ENCODE measurements at regions of chr9 and their contacts with region 1.

Region 1: GRCh38 chr9:127525401-127526187 is 74.3 kb downstream of the LRSAM1 start:
- DNase-seq: no peak
- H3K4me3 ChIP-seq: no peak overlapping the region
- H3K27ac ChIP-seq: no peak overlapping the region
- H3K4me1 ChIP-seq: peaks cover 44% of the 10 kb centered on the region
- H3K27me3 ChIP-seq: no peaks in the 10 kb centered on the region
- CTCF ChIP-seq: peak; percentile 75 to 79

Region 2: GRCh38 chr9:126885131-126885641 is 640.4 kb before region 1 on chr9:
- CTCF ChIA-PET with region 1: no interaction called
- dilution Hi-C with region 1: no loop called
- in situ Hi-C with region 1: no loop called
- intact Hi-C with region 1: no loop called
- DNase-seq: no peak
- H3K4me3 ChIP-seq: no peak overlapping the region
- H3K27ac ChIP-seq: no peak overlapping the region
- H3K4me1 ChIP-seq: no peaks in the 10 kb centered on the region
- H3K27me3 ChIP-seq: no peaks in the 10 kb centered on the region
- CTCF ChIP-seq: no peak

Region 3: DNA sequence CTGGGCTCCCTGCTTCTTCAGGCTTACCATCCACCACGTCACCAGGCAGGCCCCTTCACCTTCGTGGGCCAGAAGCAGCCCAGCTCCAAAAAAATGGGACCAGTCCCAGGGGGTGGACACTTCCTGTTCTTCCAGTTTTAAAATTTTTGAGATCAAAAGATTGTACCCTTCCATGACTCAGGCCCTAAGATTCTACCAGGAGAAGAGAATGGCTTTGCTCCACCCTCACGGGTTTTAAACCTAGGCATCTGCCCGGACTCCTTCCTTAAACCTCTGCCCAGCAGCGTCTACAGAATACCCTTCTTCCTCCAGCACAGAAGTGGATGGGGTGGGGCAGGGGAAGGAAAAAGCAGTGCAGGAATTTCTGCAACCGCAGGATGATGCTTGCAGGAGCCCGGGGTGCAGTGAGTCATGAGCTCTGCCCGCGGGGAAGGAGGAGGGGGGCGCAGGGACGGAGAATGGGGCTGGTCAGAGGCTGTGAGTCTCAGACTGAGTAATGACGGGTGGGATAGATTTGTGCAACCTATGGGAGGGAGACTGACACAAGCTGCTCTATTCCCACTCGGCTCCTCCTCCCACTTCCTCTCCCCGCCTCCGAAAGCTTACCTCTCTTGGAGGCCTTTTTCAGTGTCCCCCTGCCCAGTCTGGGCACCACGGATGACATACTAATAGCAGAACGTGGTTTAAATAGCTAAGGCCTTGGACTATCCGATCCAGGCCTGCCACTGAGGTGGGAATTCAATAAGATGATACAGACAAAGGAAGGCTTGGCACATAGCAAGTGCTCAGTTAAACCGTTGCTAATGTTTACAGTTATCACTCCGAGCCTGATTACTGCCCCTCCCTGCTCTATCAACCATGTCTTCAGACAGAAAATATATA is 36.3 kb after region 1 on chr9:
- CTCF ChIA-PET with region 1: no interaction called
- dilution Hi-C with region 1: loop called (anchors 5 kb)
- in situ Hi-C with region 1: no loop called
- intact Hi-C with region 1: no loop called
- DNase-seq: peak; percentile 99
- H3K4me3 ChIP-seq: no peak overlapping the region
- H3K27ac ChIP-seq: peak overlapping the region; percentile 76
- H3K4me1 ChIP-seq: peaks cover 87% of the 10 kb centered on the region
- H3K27me3 ChIP-seq: no peaks in the 10 kb centered on the region
- CTCF ChIP-seq: no peak